ENCODE measurements at regions of chr9 and their contacts with region 1.

Region 1: DNA sequence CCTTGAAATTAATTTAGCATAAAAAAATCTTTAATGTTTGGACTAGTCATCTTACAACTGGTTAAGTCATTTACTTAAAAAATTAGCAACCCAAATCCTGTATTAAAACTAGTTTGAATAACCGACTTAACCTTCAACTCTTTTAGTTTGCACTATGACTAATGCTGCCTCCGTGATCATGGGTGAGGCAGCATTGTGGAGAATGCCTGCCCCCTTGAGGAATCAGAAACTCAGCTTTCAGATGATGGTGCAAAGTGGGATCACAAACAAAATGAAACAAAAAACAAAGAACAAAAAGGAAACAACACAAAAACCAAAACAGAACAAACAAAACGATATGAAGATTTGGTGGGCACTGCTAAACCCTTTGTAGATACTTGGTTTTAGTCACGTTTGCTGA is 127.0 kb upstream of the PALM2AKAP2 start:
- DNase-seq: peak in 41 of 42 donors; percentile 10 to 87 (median 62)

Region 2: GRCh38 chr9:109574068-109574882 is 78.7 kb before region 1 on chr9:
- intact Hi-C with region 1: loop called (anchors 5 kb)
- DNase-seq: peak in 28 of 42 donors; percentile 15 to 89 (median 60)

Region 3: DNA sequence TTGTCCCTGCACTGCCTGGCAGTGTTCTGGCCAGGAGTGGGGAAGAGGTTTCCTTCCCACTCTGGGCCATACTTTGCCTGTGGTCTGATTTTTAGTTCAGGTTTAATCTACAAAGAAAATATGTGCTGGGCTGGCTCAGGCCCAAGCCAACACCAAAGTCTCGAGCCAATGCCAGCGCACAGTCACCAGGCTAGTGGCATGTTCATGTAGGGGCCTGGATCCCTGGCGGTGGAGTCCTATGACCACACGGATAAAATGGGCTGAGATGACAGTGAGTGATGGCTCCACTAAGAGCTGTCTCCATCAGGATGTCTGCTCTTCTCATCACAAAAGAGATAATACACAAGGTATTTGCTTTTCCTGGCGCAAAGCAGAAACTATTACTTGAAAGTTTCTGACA is 62.0 kb before region 1 on chr9:
- intact Hi-C with region 1: no loop called
- DNase-seq: no peak

Region 4: GRCh38 chr9:109766336-109766735 is 113.4 kb after region 1 on chr9:
- intact Hi-C with region 1: no loop called
- DNase-seq: no peak

Measured in head of caudate nucleus (tissue), 42 donors.